Activated CD8-positive, alpha-beta T cell treated with anti-CD3 and anti-CD28 coated beads, Interleukin-2, amount 10 ng/mL, durations not matched to agents 7 days and 5 days (primary cell): ENCODE measurements at regions of chr6 and their contacts with region 1.

Region 1: DNA sequence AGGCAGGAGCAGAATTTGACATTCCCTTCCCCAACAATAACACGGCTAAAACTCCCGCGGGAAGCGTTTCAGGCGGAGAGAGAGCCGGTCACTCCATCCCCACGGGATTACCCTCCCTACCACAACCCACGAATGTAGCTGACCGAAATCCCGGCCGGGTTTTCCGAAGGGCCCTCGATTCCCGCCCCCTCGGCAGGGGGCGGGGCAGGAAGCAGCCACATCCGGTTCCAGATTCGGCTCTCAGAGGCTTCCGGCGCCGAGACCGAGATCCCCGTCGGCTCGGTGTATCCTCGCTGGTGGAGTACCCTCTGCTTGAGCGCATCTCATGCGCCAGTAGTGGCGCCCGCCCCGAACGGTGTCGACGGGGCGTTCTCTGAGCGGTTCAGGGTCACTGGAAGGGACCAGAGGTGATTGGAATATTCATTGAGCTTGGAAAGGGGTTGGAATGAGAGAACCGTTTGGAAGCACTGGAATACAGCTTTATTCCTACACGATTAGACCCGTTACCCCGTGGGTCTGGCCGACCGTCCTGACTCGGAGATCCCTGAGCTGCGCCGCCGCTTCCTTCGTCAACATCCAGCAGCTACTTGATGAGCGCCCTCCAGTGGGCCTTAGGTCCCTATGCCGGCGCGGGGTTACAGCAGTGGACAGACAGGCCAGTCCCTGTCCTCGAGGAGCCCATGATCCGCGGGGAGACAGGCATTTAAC is 649 bp upstream of the RGL2 start:
- DNase-seq: peak; percentile 95
- ATAC-seq: peak; percentile 79
- H3K4me3 Mint-ChIP-seq: peak overlapping the region; percentile 98
- H3K27ac Mint-ChIP-seq: peak overlapping the region; percentile 99
- H3K4me1 Mint-ChIP-seq: peaks cover 33% of the 10 kb centered on the region
- H3K27me3 Mint-ChIP-seq: no peaks in the 10 kb centered on the region

Region 2: DNA sequence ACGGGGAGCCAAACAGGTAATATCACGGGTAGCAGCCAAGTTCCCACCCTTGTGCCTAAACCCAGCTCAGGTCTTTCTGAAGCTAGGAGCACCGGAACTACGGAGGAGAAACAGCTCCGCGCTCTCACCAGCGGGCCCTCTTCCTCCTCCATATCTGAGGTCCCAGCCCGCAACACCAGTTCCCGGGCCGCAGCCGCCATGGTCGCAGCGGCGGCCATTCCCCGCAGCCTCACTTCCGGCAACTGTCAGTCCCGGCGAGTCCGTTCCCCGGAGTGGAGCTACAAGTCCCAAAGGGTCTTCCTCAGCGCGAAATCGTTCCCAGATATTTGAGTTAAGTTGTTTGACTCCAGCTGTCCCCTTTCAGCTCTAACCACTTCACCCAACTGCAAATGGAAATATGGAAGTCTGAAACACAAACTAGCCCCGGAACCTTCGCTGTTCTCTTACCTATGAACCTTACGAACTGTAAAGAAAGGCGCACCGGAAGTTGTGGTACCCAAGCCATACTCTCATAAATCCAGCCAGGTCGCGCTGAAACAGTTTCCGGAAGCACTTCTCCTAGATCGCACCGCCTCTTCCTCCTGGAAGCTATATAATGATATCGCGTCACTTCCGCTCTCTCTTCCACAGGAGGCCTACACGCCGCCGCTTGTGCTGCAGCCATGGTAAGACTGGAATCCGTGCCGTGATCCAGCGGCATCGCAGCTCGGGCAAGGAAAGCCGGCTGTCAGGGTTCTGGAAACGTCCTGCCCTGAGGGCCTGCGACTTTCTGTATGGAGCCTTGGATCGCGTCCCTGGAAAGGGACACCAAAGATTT is 27.7 kb before region 1 on chr6 and contains the starts of genes RPS18 and VPS52:
- CTCF ChIA-PET with region 1: interaction called, 51 read pairs
- POLR2A ChIA-PET with region 1: interaction called, 54 read pairs
- DNase-seq: peak; percentile 96
- ATAC-seq: peak; percentile 84
- H3K4me3 Mint-ChIP-seq: peak within 1 kb of the TSS; percentile 99
- H3K27ac Mint-ChIP-seq: peak within 1 kb of the TSS; percentile 100
- H3K4me1 Mint-ChIP-seq: peaks cover 52% of the 10 kb centered on the region
- H3K27me3 Mint-ChIP-seq: no peaks in the 10 kb centered on the region
- total RNA-seq, gene RPS18: 2,792 to 2,813 TPM
- total RNA-seq, gene VPS52: 59.3 to 59.5 TPM

Region 3: GRCh38 chr6:33276864-33277662 is 22.3 kb before region 1 on chr6 and contains the start of gene B3GALT4:
- CTCF ChIA-PET with region 1: interaction called, 51 read pairs
- POLR2A ChIA-PET with region 1: interaction called, 54 read pairs
- DNase-seq: peak; percentile 81
- ATAC-seq: peak; percentile 74
- H3K4me3 Mint-ChIP-seq: peak within 1 kb of the TSS; percentile 99
- H3K27ac Mint-ChIP-seq: peak within 1 kb of the TSS; percentile 97
- H3K4me1 Mint-ChIP-seq: peaks cover 64% of the 10 kb centered on the region
- H3K27me3 Mint-ChIP-seq: no peaks in the 10 kb centered on the region
- total RNA-seq, gene B3GALT4: 12.2 to 12.8 TPM

Region 4: GRCh38 chr6:33288921-33289748 is 10.3 kb before region 1 on chr6 and contains the starts of genes PFDN6 and WDR46:
- CTCF ChIA-PET with region 1: interaction called, 25 read pairs
- POLR2A ChIA-PET with region 1: interaction called, 37 read pairs
- DNase-seq: peak; percentile 93
- ATAC-seq: peak; percentile 97
- H3K4me3 Mint-ChIP-seq: peak within 1 kb of the TSS; percentile 97
- H3K27ac Mint-ChIP-seq: peak within 1 kb of the TSS; percentile 87
- H3K4me1 Mint-ChIP-seq: peaks cover 46% of the 10 kb centered on the region
- H3K27me3 Mint-ChIP-seq: no peaks in the 10 kb centered on the region
- total RNA-seq, gene PFDN6: 72.0 to 78.4 TPM
- total RNA-seq, gene WDR46: 66.7 to 68.9 TPM

Region 5: GRCh38 chr6:33312409-33313158 is 13.2 kb after region 1 on chr6:
- CTCF ChIA-PET with region 1: interaction called, 19 read pairs
- POLR2A ChIA-PET with region 1: interaction called, 25 read pairs
- DNase-seq: peak; percentile 92
- ATAC-seq: peak; percentile 43
- H3K4me3 Mint-ChIP-seq: peak overlapping the region; percentile 99
- H3K27ac Mint-ChIP-seq: peak overlapping the region; percentile 97
- H3K4me1 Mint-ChIP-seq: peaks cover 52% of the 10 kb centered on the region
- H3K27me3 Mint-ChIP-seq: no peaks in the 10 kb centered on the region

Region 6: GRCh38 chr6:33317669-33318425 is 18.5 kb after region 1 on chr6 and contains the start of gene ZBTB22:
- CTCF ChIA-PET with region 1: interaction called, 19 read pairs
- POLR2A ChIA-PET with region 1: interaction called, 25 read pairs
- DNase-seq: peak; percentile 98
- ATAC-seq: peak; percentile 70
- H3K4me3 Mint-ChIP-seq: peak within 1 kb of the TSS; percentile 97
- H3K27ac Mint-ChIP-seq: peak within 1 kb of the TSS; percentile 96
- H3K4me1 Mint-ChIP-seq: peaks cover 78% of the 10 kb centered on the region
- H3K27me3 Mint-ChIP-seq: no peaks in the 10 kb centered on the region
- total RNA-seq, gene ZBTB22: 10.7 to 11.1 TPM

Region 7: GRCh38 chr6:33344701-33345697 is 45.6 kb after region 1 on chr6:
- CTCF ChIA-PET with region 1: interaction called, 12 read pairs
- POLR2A ChIA-PET with region 1: interaction called, 6 read pairs
- DNase-seq: peak; percentile 85
- ATAC-seq: peak; percentile 68
- H3K4me3 Mint-ChIP-seq: peak overlapping the region; percentile 69
- H3K27ac Mint-ChIP-seq: peak overlapping the region; percentile 94
- H3K4me1 Mint-ChIP-seq: peaks cover 40% of the 10 kb centered on the region
- H3K27me3 Mint-ChIP-seq: no peaks in the 10 kb centered on the region

Region 8: GRCh38 chr6:33410711-33411631 is 111.6 kb after region 1 on chr6 and contains the start of gene PHF1:
- CTCF ChIA-PET with region 1: no interaction called
- POLR2A ChIA-PET with region 1: no interaction called
- DNase-seq: no peak
- ATAC-seq: peak; percentile 62
- H3K4me3 Mint-ChIP-seq: peak within 1 kb of the TSS; percentile 81
- H3K27ac Mint-ChIP-seq: peak within 1 kb of the TSS; percentile 97
- H3K4me1 Mint-ChIP-seq: peaks cover 53% of the 10 kb centered on the region
- H3K27me3 Mint-ChIP-seq: no peaks in the 10 kb centered on the region
- total RNA-seq, gene PHF1: 35.9 to 36.5 TPM